Naive thymus-derived CD4-positive, alpha-beta T cell (primary cell): ENCODE measurements at regions of chr7 and their contacts with region 1.

Region 1: DNA sequence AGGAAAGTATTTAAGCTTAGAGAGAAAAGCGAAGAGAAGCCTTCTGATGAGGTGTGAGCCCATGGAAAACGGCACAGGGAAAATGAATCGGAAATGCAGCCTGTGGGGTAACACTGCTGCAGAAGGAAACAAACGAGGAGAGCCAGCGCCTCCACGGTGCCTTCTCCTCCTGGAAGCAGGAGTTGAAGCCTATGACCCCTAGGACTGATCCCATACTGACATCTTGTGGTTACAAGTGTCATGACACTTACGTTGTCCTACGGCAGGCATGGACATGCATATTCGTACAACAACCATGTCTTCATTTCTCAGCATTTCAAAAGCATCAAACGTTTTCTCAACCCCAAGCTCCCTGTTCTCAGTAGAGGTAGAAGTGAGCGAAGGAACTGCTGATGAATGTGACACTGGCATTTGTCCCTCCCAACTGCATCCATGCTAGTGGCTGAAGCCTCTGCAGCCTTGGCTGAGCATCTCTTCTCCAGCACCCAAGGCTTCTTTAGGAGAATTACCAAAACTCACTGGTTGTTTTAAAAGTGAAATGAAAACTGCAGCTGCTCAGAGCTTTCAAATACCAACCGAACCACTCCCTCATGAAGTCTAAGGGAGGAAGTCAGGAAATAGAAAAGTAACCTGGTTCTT is 160.2 kb downstream of the JAZF1 start:
- DNase-seq: peak in 7 of 9 donors; percentile 27 to 63 (median 53)
- ATAC-seq: peak; percentile 90
- H3K4me3 ChIP-seq: no peak overlapping the region
- H3K4me3 Mint-ChIP-seq: peak overlapping the region in 1 of 10 donors; percentile 11
- H3K27ac ChIP-seq: no peak overlapping the region
- H3K27ac Mint-ChIP-seq: no peak overlapping the region
- H3K4me1 ChIP-seq: no peaks in the 10 kb centered on the region
- H3K4me1 Mint-ChIP-seq: peaks cover 0 to 17% (median 2%) of the 10 kb centered on the region in 7 donors
- H3K27me3 ChIP-seq: no peaks in the 10 kb centered on the region
- H3K27me3 Mint-ChIP-seq: peaks cover 0 to 3% (median 0%) of the 10 kb centered on the region in 5 donors

Region 2: GRCh38 chr7:27210441-27211083 is 809.9 kb before region 1 on chr7:
- CTCF ChIA-PET with region 1: interaction called, 3 read pairs
- POLR2A ChIA-PET with region 1: no interaction called
- intact Hi-C with region 1: loop called (anchors 1 to 5 kb)
- DNase-seq: peak in 2 of 9 donors; percentile 28 to 47
- ATAC-seq: peak; percentile 74
- H3K4me3 ChIP-seq: no peak overlapping the region
- H3K4me3 Mint-ChIP-seq: peak overlapping the region; percentile 35 to 79 (median 66)
- H3K27ac ChIP-seq: no peak overlapping the region
- H3K27ac Mint-ChIP-seq: no peak overlapping the region
- H3K4me1 ChIP-seq: peaks cover 4 to 7% of the 10 kb centered on the region in 2 donors
- H3K4me1 Mint-ChIP-seq: peaks cover 0 to 29% (median 18%) of the 10 kb centered on the region in 7 donors
- H3K27me3 ChIP-seq: peaks cover 21 to 64% of the 10 kb centered on the region in 2 donors
- H3K27me3 Mint-ChIP-seq: peaks cover 80 to 97% (median 93%) of the 10 kb centered on the region in 5 donors

Region 3: DNA sequence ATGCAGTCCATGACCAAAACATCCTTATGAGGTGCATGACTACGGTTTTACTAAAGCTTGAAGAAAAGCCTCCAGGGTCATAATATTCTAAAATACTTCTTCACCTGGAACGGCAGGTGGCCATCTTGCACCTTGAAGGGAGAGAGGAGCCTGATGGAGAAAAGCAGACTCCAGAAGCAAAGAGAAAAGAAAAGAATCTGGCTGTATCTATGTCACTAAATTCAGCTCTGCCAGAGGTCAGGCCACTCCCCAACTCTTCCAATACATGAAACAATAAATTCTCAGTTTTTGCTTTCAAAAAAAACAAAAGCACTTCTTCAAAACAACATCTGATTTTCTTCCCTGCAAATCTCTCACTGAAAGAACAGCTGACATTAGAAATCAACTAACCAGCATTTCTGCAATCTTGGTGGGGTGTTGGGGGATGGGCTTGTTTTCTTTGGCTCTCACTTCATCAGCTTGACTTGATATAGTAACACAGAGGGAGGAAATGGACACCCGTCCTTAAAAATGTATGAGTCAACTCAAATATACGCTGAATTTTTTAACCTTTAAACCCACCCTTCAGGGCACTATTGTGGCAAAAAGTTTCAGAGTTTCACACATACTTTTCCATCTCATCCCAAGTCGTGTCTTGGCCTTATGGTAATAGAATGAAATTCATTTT is 379.4 kb before region 1 on chr7:
- CTCF ChIA-PET with region 1: interaction called, 3 read pairs
- POLR2A ChIA-PET with region 1: no interaction called
- intact Hi-C with region 1: loop called in 1 of 2 experiments (anchors 2 kb)
- DNase-seq: no peak
- ATAC-seq: no peak
- H3K4me3 ChIP-seq: no peak overlapping the region
- H3K4me3 Mint-ChIP-seq: no peak overlapping the region
- H3K27ac ChIP-seq: no peak overlapping the region
- H3K27ac Mint-ChIP-seq: no peak overlapping the region
- H3K4me1 ChIP-seq: peaks cover 0 to 4% of the 10 kb centered on the region in 2 donors
- H3K4me1 Mint-ChIP-seq: peaks cover 7 to 49% (median 26%) of the 10 kb centered on the region in 7 donors
- H3K27me3 ChIP-seq: no peaks in the 10 kb centered on the region
- H3K27me3 Mint-ChIP-seq: no peaks in the 10 kb centered on the region

Region 4: DNA sequence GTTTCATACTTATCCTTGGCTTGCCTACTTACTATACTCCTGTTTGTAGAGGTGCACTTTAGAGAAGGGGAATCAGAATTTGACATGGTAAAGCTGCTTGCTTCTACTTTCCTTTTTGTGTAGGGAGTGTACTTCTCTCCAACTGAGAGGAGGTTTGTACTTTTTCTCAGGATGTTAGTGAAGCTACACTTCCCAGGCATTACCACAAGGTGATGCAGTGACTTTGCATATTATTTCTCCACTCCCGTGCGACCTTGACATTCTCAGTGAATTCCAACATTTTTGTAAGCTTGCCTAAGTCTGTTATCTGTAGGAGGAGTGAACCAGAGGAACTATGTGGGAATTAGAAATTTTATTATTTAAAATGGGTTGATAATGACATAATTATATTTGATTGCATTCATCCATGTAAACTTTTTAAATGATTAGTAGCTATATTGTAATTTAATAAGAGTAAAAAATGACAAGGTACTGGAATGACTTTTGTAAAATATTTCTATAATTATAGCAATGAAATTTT is 275.3 kb before region 1 on chr7:
- CTCF ChIA-PET with region 1: no interaction called
- POLR2A ChIA-PET with region 1: no interaction called
- intact Hi-C with region 1: loop called (anchors 1 kb)
- DNase-seq: peak in 4 of 9 donors; percentile 5 to 14 (median 9)
- ATAC-seq: no peak
- H3K4me3 ChIP-seq: no peak overlapping the region
- H3K4me3 Mint-ChIP-seq: peak overlapping the region in 5 of 10 donors; percentile 26 to 58 (median 54)
- H3K27ac ChIP-seq: no peak overlapping the region
- H3K27ac Mint-ChIP-seq: no peak overlapping the region
- H3K4me1 ChIP-seq: peaks cover 18 to 23% of the 10 kb centered on the region in 2 donors
- H3K4me1 Mint-ChIP-seq: peaks cover 35 to 81% (median 66%) of the 10 kb centered on the region in 7 donors
- H3K27me3 ChIP-seq: no peaks in the 10 kb centered on the region
- H3K27me3 Mint-ChIP-seq: no peaks in the 10 kb centered on the region

Region 5: GRCh38 chr7:27921081-27921836 is 99.2 kb before region 1 on chr7:
- CTCF ChIA-PET with region 1: interaction called, 10 read pairs
- POLR2A ChIA-PET with region 1: no interaction called
- intact Hi-C with region 1: loop called (anchors 1 to 10 kb)
- DNase-seq: peak in 6 of 9 donors; percentile 17 to 59 (median 44)
- ATAC-seq: peak; percentile 67
- H3K4me3 ChIP-seq: no peak overlapping the region
- H3K4me3 Mint-ChIP-seq: no peak overlapping the region
- H3K27ac ChIP-seq: no peak overlapping the region
- H3K27ac Mint-ChIP-seq: peak overlapping the region in 1 of 9 donors; percentile 11
- H3K4me1 ChIP-seq: no peaks in the 10 kb centered on the region
- H3K4me1 Mint-ChIP-seq: peaks cover 0 to 11% (median 1%) of the 10 kb centered on the region in 7 donors
- H3K27me3 ChIP-seq: no peaks in the 10 kb centered on the region
- H3K27me3 Mint-ChIP-seq: no peaks in the 10 kb centered on the region